PC-9 (cell line): ENCODE measurements at regions of chr10 and their contacts with region 1.

Region 1: DNA sequence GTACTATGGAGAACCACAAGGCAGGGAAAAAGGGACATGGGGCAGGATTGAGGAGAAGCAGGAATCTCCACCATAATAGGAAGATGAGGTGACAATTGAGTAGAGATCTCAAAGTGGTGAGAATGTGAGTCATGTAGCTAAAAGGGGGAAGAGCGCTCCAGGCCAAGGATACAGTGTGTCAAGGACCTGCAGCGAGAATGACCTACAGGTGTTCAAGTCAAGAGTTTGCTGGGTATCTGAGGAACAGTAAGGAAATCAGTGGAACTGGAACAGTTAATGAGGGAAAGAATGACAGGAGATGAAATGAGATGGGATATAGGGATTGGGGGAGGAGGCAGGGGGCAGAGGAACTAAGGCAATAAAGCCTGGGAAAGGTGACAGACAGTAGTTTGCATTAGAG is 33.6 kb downstream of the SFR1 start:
- DNase-seq: no peak
- H3K4me3 ChIP-seq: no peak overlapping the region
- H3K27ac ChIP-seq: no peak overlapping the region
- H3K4me1 ChIP-seq: no peaks in the 10 kb centered on the region
- H3K27me3 ChIP-seq: no peaks in the 10 kb centered on the region
- CTCF ChIP-seq: no peak

Region 2: GRCh38 chr10:104109908-104110662 is 45.5 kb before region 1 on chr10:
- CTCF ChIA-PET with region 1: no interaction called
- POLR2A ChIA-PET with region 1: interaction called, 18 read pairs
- intact Hi-C with region 1: no loop called
- DNase-seq: peak in 1 of 2 experiments; percentile 79
- H3K4me3 ChIP-seq: no peak overlapping the region
- H3K27ac ChIP-seq: peak overlapping the region; percentile 52
- H3K4me1 ChIP-seq: peaks cover 14% of the 10 kb centered on the region
- H3K27me3 ChIP-seq: no peaks in the 10 kb centered on the region
- CTCF ChIP-seq: no peak